GM13977 (cell line): ENCODE measurements at regions of chr11 and their contacts with region 1.

Region 1: DNA sequence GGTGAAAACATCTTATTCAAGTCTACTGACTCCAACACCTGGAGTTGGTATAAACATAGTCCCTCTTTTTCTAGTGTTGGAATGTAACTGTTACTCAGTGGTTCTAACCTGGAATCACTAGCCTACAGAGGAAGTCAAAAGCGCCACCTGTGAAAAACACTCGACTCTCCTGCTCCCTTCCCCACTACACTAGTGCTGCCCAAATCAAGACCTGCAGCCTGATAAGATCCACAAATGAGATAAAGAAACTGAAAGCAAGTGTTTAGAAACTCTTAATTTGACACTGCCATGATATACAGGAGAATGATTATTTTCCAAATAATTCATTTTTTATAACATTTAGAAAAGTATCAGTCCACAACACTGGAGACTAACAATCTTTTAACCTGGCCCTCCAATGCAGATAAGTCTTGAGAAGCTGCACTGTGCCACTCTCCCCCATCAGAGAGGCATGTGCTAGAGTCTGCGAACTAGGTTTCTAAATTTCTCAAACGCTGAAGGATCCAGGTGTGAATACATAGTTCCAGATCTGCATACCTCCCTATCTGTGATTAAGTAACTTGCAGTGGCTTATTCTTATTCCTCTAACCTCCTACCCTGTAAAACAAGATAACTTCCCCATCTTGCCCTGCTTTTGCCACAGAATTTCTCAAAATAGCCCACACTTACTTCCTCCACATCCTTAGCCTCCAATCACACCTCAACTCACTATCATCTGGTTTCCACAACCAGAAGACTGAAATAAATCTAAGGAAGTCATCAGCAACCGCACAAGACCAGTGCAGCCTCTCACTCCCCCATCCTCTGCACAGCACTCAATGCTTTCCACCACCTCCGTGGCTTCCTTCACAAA is 88.1 kb downstream of the RRAS2 start:
- DNase-seq: peak; percentile 60
- CTCF ChIP-seq: no peak

Region 2: DNA sequence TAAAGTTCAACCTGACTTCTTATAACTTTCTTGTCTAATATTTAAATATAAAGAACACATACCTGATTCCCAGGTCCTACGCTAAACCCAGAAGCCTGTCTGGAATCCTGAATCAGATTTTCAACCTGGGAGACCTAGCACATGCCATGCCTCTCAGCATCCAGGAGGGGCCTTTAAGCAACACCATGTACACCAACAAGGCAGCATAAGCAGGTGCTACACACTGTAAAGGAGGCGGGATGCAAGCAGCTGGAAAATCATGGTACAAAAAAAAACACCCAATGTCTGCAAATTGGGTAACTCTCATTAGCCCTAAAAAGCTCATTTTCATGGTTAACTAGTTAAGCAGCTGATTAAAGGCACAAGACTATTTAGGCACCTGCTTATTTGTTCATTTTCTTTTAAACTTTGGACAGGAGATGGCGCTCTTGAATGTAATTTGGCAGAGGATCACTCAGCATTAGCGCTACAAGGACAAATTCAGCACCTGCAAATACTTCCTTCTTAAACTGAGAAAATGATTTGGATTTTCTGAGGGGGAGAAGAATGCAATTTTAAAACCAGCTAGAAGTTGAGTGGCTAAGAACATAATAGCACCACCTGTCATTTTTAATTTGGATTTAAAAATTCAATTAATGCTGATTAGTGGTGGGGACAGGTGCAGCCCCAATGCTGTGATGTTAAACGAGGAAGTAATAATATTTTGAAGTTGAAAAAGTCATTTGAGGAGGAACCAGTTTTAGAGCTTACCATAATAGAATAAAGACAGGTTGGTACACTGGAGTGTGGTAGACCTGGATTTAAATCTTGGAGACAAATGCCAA is 498.5 kb before region 1 on chr11:
- in situ Hi-C with region 1: loop called (anchors 25 kb)
- DNase-seq: peak; percentile 31
- CTCF ChIP-seq: peak; percentile 53